ENCODE measurements at regions of chr9 and their contacts with region 1.

Region 1: DNA sequence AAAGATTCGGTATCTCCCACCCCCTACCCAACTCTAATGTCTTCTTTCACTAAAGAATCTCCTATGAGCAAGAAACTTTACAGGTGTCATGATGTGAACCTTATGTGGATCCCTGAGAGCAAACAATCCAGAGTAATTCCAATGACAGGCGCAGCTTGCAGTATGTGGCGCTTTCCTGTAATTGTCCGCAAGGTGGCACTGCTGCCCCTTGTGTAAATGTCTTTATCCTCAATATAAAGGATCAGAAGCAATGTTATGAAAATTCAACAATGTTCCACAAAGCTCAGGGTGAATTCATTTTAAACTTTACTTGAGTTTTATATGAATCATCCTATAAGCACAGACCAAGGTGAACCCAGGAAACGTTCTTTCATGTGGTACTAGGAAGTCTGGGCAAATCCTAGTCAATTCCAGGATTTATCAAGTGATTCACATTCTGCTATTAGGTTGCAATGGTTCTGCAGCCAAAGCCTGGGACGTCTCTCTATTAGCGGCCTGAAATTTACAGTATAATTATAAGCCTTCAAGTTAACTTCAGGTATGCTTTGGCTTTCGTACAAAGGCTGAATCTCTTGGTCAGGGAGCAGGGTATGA is 113.7 kb downstream of the TRPM6 start:
- DNase-seq: peak; percentile 63 to 74 (median 72)
- ATAC-seq: peak; percentile 90 to 95 (median 93)
- H3K4me3 ChIP-seq: no peak overlapping the region
- H3K27ac ChIP-seq: no peak overlapping the region
- H3K4me1 ChIP-seq: no peaks in the 10 kb centered on the region
- H3K27me3 ChIP-seq: no peaks in the 10 kb centered on the region
- CTCF ChIP-seq: peak; percentile 83 to 96 (median 90)
- POLR2A ChIP-seq: no peak

Region 2: GRCh38 chr9:74551266-74551665 is 222.7 kb before region 1 on chr9:
- intact Hi-C with region 1: no loop called
- DNase-seq: no peak
- ATAC-seq: no peak
- H3K4me3 ChIP-seq: no peak overlapping the region
- H3K27ac ChIP-seq: no peak overlapping the region
- H3K4me1 ChIP-seq: no peaks in the 10 kb centered on the region
- H3K27me3 ChIP-seq: no peaks in the 10 kb centered on the region
- CTCF ChIP-seq: no peak
- POLR2A ChIP-seq: no peak

Region 3: GRCh38 chr9:75001719-75002422 is 227.9 kb after region 1 on chr9:
- intact Hi-C with region 1: loop called (anchors 5 to 10 kb)
- DNase-seq: no peak
- ATAC-seq: peak; percentile 98 to 99 (median 99)
- H3K4me3 ChIP-seq: no peak overlapping the region
- H3K27ac ChIP-seq: peak overlapping the region in 2 of 3 donors; percentile 31 to 44
- H3K4me1 ChIP-seq: peaks cover 0 to 14% (median 0%) of the 10 kb centered on the region in 4 donors
- H3K27me3 ChIP-seq: no peaks in the 10 kb centered on the region
- CTCF ChIP-seq: peak; percentile 77 to 83 (median 80)
- POLR2A ChIP-seq: no peak

Region 4: GRCh38 chr9:75071530-75072124 is 297.6 kb after region 1 on chr9:
- intact Hi-C with region 1: loop called in 1 of 2 experiments (anchors 10 kb)
- DNase-seq: no peak
- ATAC-seq: no peak
- H3K4me3 ChIP-seq: no peak overlapping the region
- H3K27ac ChIP-seq: no peak overlapping the region
- H3K4me1 ChIP-seq: no peaks in the 10 kb centered on the region
- H3K27me3 ChIP-seq: no peaks in the 10 kb centered on the region
- CTCF ChIP-seq: no peak
- POLR2A ChIP-seq: no peak

Measured in right lobe of liver (tissue), 6 donors.